ENCODE measurements at regions of chr15 and their contacts with region 1.

Region 1: DNA sequence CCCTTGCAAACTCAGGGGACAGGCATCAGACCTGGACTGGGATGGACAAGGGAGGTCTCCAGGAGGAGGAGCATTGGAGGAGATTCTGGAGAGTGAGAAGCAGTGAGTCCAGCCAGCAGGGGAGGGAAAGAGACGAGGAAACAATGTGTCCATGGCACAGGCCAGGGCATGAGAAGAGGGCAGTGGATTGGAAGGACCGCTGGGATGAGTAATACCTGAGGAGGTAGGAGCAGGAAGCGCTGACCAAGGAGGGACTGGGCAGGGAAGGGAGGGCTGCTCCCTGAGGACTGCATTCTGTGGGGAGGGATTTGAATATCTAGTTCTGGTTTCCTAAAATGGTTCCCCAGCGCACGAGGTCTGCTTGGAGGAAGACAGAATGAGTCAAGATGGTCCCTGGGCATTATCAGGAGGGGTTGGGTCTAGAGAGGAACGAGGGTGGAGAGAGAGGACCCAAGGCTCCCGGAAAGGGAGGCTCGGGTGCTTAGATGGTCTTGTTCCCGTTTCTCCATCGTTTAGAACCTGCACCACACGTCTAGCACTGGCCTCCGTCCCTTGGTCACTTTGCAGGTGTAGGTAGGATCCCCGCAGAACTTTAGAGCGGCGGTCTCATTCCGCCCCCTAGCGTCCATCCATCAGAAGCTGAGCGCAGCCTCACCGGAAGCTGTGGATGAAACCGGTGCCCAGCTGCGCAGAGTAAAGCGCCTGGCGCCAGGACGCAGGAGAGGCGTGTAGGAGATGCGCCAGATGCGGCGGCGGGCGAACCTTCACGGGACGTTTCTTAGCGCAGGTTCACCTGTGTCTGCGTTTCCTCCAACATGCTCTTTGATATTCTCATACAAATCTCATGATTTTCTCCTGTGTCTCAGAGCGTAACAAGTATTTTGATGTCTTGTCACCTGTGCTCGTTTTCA is 190.7 kb upstream of the NDN start:
- DNase-seq: peak; percentile 83
- ATAC-seq: peak; percentile 99
- H3K4me3 Mint-ChIP-seq: peak overlapping the region; percentile 64
- H3K27ac Mint-ChIP-seq: no peak overlapping the region
- H3K4me1 Mint-ChIP-seq: peaks cover 5% of the 10 kb centered on the region
- H3K27me3 Mint-ChIP-seq: peaks cover 16% of the 10 kb centered on the region
- CTCF ChIP-seq: peak; percentile 60

Region 2: DNA sequence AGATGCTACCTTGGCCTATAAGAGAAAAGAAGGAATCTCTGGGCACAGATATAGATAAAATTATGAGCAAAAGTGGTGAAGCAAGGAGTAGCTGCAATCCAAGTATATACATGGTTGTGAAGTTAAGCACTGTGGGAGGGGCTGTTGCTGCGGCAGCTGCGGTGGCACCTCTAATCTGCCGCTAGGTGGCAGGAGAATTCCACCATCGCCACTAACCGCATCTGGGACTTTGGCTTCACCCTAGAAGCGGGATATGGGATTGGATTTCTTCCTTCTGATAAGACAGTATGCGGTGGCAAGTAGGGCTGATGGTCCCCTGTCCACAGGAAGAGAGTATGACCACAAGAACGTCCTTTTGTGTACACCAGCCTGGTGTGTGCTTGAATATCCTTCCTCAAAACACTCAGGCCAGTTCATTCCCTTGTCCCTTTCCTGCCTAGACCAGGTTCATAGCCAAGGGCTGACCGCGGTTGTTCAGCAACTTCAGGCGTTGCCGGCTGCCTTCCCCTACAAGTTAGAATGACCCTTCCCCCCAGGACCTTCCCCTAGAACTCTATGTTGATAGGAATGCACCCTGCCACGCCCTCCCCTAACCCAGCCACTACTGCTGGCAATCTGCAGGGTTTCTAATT is 235.2 kb before region 1 on chr15:
- CTCF ChIA-PET with region 1: interaction called, 12 read pairs
- POLR2A ChIA-PET with region 1: no interaction called
- DNase-seq: peak; percentile 69
- ATAC-seq: peak; percentile 77
- H3K4me3 Mint-ChIP-seq: peak overlapping the region; percentile 38
- H3K27ac Mint-ChIP-seq: no peak overlapping the region
- H3K4me1 Mint-ChIP-seq: peaks cover 6% of the 10 kb centered on the region; the same call in 1 of the 2 replicates
- H3K27me3 Mint-ChIP-seq: peaks cover 11% of the 10 kb centered on the region
- CTCF ChIP-seq: peak; percentile 76

Region 3: DNA sequence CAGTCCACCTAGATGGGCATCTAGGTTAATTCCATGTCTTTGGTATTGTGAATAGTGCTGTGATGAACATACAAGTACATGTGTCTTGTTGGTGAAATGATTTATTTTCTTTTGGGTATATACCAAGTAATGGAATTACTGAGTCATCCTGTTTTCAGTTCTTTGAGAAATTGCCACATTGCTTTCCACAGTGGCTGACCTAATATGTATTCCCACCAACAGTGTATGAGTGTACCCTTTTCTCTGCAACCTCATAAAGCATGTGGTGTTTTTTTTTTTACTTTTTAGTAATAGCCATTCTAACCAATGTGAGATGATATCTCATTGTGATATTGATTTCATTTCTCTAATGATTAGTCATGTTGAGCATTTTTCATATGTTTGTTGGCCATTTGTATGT is 104.7 kb before region 1 on chr15:
- CTCF ChIA-PET with region 1: no interaction called
- POLR2A ChIA-PET with region 1: no interaction called
- DNase-seq: no peak
- ATAC-seq: no peak
- H3K4me3 Mint-ChIP-seq: no peak overlapping the region
- H3K27ac Mint-ChIP-seq: no peak overlapping the region
- H3K4me1 Mint-ChIP-seq: no peaks in the 10 kb centered on the region
- H3K27me3 Mint-ChIP-seq: no peaks in the 10 kb centered on the region; the same call in 1 of the 2 replicates
- CTCF ChIP-seq: no peak

Region 4: DNA sequence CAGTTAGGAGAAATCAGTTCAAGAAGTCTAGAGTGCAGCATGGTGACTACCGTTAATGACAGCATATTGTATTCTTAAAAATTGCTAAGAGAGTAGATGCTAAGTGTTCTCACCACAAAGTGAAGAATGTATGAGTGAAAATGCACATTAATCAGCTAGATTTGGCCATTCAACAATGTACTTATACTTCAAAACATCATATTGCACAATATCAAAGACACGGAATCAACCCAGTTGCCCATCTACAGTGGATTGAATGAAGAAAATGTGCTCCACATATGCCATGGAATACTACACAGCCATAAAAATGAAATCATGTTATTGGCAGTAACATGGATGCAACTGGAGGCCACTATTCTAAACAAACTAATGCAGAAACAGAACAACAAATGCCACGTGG is 70.8 kb before region 1 on chr15:
- CTCF ChIA-PET with region 1: no interaction called
- POLR2A ChIA-PET with region 1: no interaction called
- DNase-seq: no peak
- ATAC-seq: no peak
- H3K4me3 Mint-ChIP-seq: no peak overlapping the region
- H3K27ac Mint-ChIP-seq: no peak overlapping the region
- H3K4me1 Mint-ChIP-seq: no peaks in the 10 kb centered on the region
- H3K27me3 Mint-ChIP-seq: peaks cover 2% of the 10 kb centered on the region
- CTCF ChIP-seq: no peak

Region 5: DNA sequence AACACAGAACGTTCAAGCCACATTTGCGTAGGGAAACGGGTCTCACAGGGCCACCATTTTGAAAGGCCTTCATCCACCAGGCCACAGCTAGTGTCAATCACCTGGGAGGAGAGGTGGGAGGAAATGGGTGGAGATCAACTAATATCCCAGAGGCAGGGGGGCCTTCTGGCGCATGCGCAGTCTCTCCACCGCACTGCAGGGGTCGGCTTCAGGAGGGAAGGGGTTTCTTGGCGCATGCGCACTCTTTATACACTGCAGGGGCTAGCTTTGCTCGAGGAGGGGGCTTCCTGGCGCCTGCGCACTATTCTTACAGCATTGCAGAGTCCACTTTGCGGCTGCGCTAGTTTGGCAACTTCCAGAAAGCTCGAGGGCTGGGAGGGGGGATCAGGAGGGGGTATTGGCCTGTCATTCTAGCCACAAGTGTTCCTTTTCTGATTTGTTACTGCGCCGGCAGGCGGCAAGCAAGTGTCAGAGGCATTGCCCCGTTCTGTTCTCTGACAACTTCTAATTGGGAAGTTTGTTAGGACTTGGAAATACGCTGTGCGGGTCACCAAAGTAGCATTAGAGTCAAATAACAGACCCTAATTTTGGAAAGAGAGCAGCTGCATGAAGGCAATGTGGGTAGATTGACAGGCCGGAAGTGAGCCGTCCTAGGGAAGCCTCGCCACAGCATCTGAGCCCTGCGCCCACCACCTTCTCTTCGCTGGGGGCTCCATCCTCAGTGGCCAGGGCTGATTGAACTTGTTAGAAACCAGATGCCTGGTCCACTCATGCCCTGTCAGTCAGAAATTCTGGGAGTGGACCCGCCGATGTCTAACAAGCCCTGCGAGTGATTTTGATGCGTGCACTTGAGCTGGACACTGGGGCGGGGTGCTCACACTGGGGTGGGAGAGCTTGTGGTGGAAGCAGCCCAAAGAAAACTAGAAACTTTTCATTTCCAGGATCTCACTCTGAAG is 17.2 kb before region 1 on chr15:
- CTCF ChIA-PET with region 1: interaction called, 16 read pairs
- POLR2A ChIA-PET with region 1: no interaction called
- DNase-seq: peak; percentile 90
- ATAC-seq: peak; percentile 84
- H3K4me3 Mint-ChIP-seq: peak overlapping the region; percentile 47
- H3K27ac Mint-ChIP-seq: no peak overlapping the region
- H3K4me1 Mint-ChIP-seq: peaks cover 35% of the 10 kb centered on the region
- H3K27me3 Mint-ChIP-seq: peaks cover 10% of the 10 kb centered on the region
- CTCF ChIP-seq: no peak

Region 6: DNA sequence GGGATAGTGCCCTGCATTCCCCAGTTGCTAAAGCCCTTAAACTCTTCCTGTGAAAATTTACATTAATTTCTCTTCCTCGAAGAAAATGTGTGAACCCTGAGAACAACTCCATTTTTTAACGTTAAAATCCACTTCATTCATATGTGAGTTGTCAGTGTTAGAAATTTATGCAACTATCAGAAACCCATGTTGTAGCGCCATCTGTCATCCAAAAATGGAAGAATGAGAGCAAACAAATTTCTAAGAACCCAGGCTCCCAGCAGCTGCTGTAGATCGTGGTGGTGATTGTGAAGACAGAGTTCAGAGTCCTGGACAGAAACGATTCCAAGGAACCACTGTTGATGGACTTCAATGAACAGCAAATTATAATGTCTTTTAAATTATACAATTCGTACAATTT is 10.9 kb before region 1 on chr15:
- CTCF ChIA-PET with region 1: interaction called, 14 read pairs
- POLR2A ChIA-PET with region 1: no interaction called
- DNase-seq: no peak
- ATAC-seq: no peak
- H3K4me3 Mint-ChIP-seq: no peak overlapping the region
- H3K27ac Mint-ChIP-seq: no peak overlapping the region
- H3K4me1 Mint-ChIP-seq: peaks cover 11% of the 10 kb centered on the region; the same call in 1 of the 2 replicates
- H3K27me3 Mint-ChIP-seq: no peaks in the 10 kb centered on the region; the same call in 1 of the 2 replicates
- CTCF ChIP-seq: no peak

Measured in WTC11 (cell line).